ENCODE measurements at regions of chr12 and their contacts with region 1.

Region 1: GRCh38 chr12:120909633-120910298 is 5.6 kb upstream of the SPPL3 start:
- DNase-seq: no peak

Region 2: GRCh38 chr12:120725659-120726509 is 183.9 kb before region 1 on chr12 and contains the start of gene ACADS:
- intact Hi-C with region 1: loop called (anchors 5 kb)
- DNase-seq: peak; percentile 96
- total RNA-seq, gene ACADS: 58.4 TPM

Region 3: DNA sequence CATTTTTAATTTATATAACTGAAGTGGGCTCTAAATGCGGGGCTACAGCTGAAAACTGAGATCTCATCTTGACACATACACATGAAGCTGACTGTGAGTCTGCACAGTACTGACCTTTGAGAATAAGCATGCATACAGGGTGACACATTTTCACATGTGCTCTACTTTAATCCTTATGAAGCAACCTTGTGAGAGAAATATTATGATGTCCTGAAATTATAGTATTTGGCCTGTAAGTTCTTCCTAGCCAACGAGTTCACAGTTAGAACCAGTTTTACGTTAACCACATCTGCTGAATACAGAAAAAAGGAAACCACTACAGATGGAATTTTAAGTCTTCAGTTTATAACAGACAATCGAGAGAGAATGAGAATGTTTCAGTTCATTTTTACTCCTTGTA is 75.9 kb before region 1 on chr12:
- intact Hi-C with region 1: loop called (anchors 5 kb)
- DNase-seq: no peak

Measured in cardiac septum (tissue), 1 donor.